ENCODE measurements at regions of chr11 and their contacts with region 1.

Region 1: GRCh38 chr11:2036863-2037486 is 39.3 kb upstream of the H19 start:
- DNase-seq: no peak
- H3K4me3 ChIP-seq: no peak overlapping the region
- H3K27ac ChIP-seq: no peak overlapping the region
- H3K4me1 ChIP-seq: no peaks in the 10 kb centered on the region
- H3K27me3 ChIP-seq: no peaks in the 10 kb centered on the region
- CTCF ChIP-seq: no peak
- EP300 ChIP-seq: no peak
- POLR2A ChIP-seq: no peak
- RAD21 ChIP-seq: no peak

Region 2: GRCh38 chr11:1882519-1883238 is 154.3 kb before region 1 on chr11:
- CTCF ChIA-PET with region 1: interaction called, 12 read pairs
- POLR2A ChIA-PET with region 1: no interaction called
- DNase-seq: peak; percentile 54 to 94
- H3K4me3 ChIP-seq: no peak overlapping the region
- H3K27ac ChIP-seq: no peak overlapping the region
- H3K4me1 ChIP-seq: peaks cover 0 to 5% (median 2%) of the 10 kb centered on the region in 4 experiments; a peak in 3 of 7 replicates
- H3K27me3 ChIP-seq: no peaks in the 10 kb centered on the region; a peak in 1 of 7 replicates
- CTCF ChIP-seq: peak; percentile 91 to 94 (median 92)
- EP300 ChIP-seq: no peak
- POLR2A ChIP-seq: no peak
- RAD21 ChIP-seq: peak; percentile 89 to 94

Region 3: DNA sequence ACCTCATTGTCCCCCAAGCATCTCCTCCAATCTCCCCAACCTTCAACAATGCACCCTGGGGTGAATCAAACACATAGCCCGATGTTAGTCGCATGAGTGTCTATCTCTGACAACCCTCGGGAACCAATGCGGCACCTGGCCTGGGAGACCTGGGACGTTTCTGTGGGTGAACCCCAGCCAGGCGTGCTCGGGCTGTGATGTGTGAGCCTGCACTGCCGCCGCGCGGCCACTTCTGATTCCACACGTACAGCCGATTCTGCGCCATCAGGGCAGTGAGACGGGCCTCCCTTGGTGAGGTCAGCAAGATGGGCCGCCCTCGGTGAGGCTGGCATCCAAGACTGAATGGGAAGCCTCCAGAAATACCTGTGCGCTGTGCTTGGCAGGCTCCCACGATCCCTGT is 34.2 kb before region 1 on chr11:
- CTCF ChIA-PET with region 1: interaction called, 17 read pairs
- POLR2A ChIA-PET with region 1: no interaction called
- DNase-seq: no peak
- H3K4me3 ChIP-seq: no peak overlapping the region
- H3K27ac ChIP-seq: no peak overlapping the region
- H3K4me1 ChIP-seq: no peaks in the 10 kb centered on the region
- H3K27me3 ChIP-seq: no peaks in the 10 kb centered on the region
- CTCF ChIP-seq: no peak
- EP300 ChIP-seq: no peak
- POLR2A ChIP-seq: no peak
- RAD21 ChIP-seq: no peak

Region 4: GRCh38 chr11:2092956-2093412 is 56.0 kb after region 1 on chr11:
- CTCF ChIA-PET with region 1: interaction called, 15 read pairs
- POLR2A ChIA-PET with region 1: no interaction called
- DNase-seq: no peak
- H3K4me3 ChIP-seq: no peak overlapping the region
- H3K27ac ChIP-seq: no peak overlapping the region
- H3K4me1 ChIP-seq: peaks cover 0 to 15% (median 12%) of the 10 kb centered on the region in 4 experiments; a peak in 6 of 7 replicates
- H3K27me3 ChIP-seq: 0 out of 7 replicates have a peak, but pooled peaks cover 0 to 3% (median 0%) of the 10 kb centered on the region in 4 experiments
- CTCF ChIP-seq: no peak
- EP300 ChIP-seq: no peak
- POLR2A ChIP-seq: no peak
- RAD21 ChIP-seq: no peak

Region 5: DNA sequence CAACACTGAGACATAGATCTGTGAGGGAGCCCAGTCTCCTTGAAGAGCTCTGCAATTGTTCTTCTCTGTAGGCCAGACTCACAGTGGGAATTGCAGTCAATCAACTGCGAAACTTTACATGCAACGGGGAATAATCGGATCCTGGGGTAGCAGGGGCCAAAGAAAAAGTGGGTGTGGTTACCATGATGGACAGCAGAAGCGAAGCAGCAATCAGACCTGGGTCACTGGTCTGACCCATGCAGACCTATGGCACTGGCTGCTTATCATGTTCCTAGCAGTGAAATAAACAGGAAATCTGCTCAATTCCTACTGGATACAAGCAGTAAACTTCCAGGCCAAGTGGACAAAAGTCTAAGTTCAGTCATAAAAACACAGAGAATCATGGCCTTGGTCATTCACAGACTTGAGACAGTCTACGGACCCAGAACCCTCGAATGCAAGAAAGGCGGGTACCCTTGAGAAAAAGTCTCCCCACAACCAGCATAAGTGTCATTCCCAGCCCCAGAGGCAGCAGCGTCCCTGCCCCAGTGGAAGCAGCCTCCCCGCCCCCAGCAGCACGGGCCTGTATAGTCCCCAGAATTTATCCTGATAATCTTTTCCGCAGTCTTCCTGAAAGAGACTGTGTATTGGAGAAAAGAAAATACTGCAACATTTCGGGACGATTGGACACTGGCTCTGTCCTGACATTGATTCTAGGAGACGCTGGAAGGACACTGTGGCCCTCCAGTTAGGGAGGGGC is 198.8 kb after region 1 on chr11:
- CTCF ChIA-PET with region 1: no interaction called
- POLR2A ChIA-PET with region 1: no interaction called
- DNase-seq: no peak
- H3K4me3 ChIP-seq: no peak overlapping the region
- H3K27ac ChIP-seq: no peak overlapping the region
- H3K4me1 ChIP-seq: peaks cover 0 to 4% (median 2%) of the 10 kb centered on the region in 4 experiments; a peak in 2 of 7 replicates
- H3K27me3 ChIP-seq: 0 out of 7 replicates have a peak, but pooled peaks cover 0 to 2% (median under 1%) of the 10 kb centered on the region in 4 experiments
- CTCF ChIP-seq: no peak
- EP300 ChIP-seq: no peak
- POLR2A ChIP-seq: no peak
- RAD21 ChIP-seq: no peak